ENCODE measurements at regions of chr2 and their contacts with region 1.

Region 1: GRCh38 chr2:207625018-207625907 is at the start of gene METTL21A:
- DNase-seq: peak; percentile 83 to 86
- H3K4me3 ChIP-seq: peak within 1 kb of the TSS; percentile 62 to 81
- H3K27ac ChIP-seq: peak within 1 kb of the TSS; percentile 87 to 95
- H3K4me1 ChIP-seq: peaks cover 0 to 5% of the 10 kb centered on the region in 2 donors
- H3K27me3 ChIP-seq: no peaks in the 10 kb centered on the region
- CTCF ChIP-seq: peak in 3 of 4 experiments; percentile 38 to 55 (median 51)
- POLR2A ChIP-seq: peak; percentile 61 to 80
- total RNA-seq, gene METTL21A: 0.77 to 32.3 (median 11.6) TPM

Region 2: GRCh38 chr2:207529330-207530159 is 95.7 kb before region 1 on chr2 and contains the start of gene CREB1:
- intact Hi-C with region 1: loop called (anchors 10 kb)
- DNase-seq: peak; percentile 97 to 100
- H3K4me3 ChIP-seq: peak within 1 kb of the TSS; percentile 68 to 72
- H3K27ac ChIP-seq: peak within 1 kb of the TSS; percentile 98 to 99
- H3K4me1 ChIP-seq: peaks cover 4 to 6% of the 10 kb centered on the region in 2 donors
- H3K27me3 ChIP-seq: no peaks in the 10 kb centered on the region
- CTCF ChIP-seq: peak in 2 of 4 experiments; percentile 2 to 10
- POLR2A ChIP-seq: peak; percentile 92 to 97
- total RNA-seq, gene CREB1: 36.5 to 96.5 (median 71.7) TPM

Region 3: DNA sequence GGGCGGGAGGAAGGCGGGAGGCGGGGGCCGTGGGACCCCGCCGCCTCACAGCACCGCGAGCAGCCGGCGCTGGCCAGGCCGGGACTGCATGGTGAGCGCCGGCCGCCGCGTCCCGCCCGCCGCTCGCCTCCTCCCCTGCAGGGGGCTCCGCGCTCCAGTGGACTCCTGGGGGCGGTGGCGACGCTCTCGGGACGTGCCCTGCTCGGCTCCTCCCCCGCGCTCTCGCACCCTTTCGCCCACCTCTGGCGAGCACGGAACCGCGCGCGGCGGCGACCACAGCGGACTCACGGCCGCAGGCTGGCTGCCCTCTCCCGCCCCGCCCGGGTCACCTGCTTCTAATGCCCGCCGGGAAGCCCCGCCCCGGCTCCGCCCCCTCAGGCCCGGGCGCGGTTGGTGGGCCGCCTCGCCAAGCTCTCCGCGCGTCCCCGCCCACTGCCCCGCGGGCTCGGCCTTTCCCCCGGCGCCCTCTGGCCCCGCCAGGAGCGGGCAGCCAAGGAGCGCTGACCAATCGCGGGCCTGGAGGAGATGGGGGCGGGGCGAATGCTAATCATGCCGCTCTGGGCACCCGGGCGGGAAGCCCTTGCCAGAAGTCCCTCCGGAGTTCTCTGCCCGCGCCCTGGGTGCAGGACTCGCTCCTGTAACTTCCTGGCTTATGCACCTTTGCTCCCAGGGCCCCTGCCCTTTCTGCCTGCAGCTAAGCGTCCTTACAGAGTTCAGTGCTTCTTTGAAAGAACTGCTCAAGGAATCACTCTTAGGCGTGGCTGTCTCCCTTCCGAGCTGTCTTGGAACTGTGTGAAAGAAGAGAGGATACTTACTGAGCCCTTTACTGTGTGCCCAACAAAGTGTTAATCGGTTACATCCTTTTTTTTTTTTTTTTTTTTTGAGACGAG is 144.6 kb after region 1 on chr2 and contains the start of gene FZD5:
- intact Hi-C with region 1: loop called (anchors 5 kb)
- DNase-seq: peak; percentile 91 to 92
- H3K4me3 ChIP-seq: peak within 1 kb of the TSS; percentile 40 to 72
- H3K27ac ChIP-seq: peak within 1 kb of the TSS; percentile 62 to 82
- H3K4me1 ChIP-seq: peaks cover 0 to 4% of the 10 kb centered on the region in 2 donors
- H3K27me3 ChIP-seq: no peaks in the 10 kb centered on the region
- CTCF ChIP-seq: peak in 3 of 4 experiments; percentile 47 to 76 (median 69)
- POLR2A ChIP-seq: peak; percentile 70 to 91
- total RNA-seq, gene FZD5: 3.8 to 8.1 (median 6.6) TPM

Region 4: DNA sequence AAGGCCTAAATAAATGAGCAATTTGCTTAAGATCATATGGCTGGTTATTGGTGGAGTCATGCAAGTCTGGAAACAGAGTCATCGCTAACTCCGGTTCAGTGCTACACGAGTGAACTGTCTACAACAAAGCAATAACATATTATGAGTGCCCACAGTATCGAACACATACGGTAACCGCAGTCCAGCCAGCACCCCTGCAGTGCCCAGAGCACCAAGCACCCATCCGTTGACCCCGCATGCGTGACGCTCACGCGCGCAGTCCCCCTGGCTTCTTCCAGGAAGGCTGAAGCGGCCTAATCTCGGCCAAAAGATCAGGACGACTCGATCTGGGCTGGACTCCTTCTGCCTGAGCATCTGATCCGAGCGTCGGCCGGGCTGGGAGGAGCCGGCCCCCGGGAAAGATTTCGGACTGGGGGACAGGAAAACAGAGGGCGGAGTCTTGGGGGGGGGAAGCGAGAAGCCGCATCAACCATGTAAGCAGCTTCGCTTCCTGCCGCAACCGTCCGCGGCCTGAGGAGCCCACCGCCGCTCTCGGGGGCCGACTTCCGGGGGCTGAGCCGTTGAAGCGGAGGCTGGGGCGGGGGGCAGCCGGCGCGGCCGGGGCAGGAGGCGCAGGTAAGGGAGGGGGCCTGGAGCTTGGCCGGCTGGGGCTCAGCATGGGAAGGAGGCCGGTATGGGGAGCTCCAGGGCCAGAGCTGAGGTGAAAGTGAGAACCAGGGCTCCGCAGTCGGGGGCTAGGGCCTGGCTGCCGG is 640.7 kb after region 1 on chr2 and contains the start of gene PIKFYVE:
- intact Hi-C with region 1: loop called (anchors 10 kb)
- DNase-seq: peak; percentile 93 to 96
- H3K4me3 ChIP-seq: peak within 1 kb of the TSS; percentile 81 to 83
- H3K27ac ChIP-seq: peak within 1 kb of the TSS; percentile 91 to 93
- H3K4me1 ChIP-seq: peaks cover 0 to 4% of the 10 kb centered on the region in 2 donors
- H3K27me3 ChIP-seq: no peaks in the 10 kb centered on the region
- CTCF ChIP-seq: peak in 1 of 4 experiments; percentile 40
- POLR2A ChIP-seq: peak; percentile 68 to 85
- total RNA-seq, gene PIKFYVE: 11.5 to 58.8 (median 28.5) TPM

Measured in uterus (tissue), 4 donors.